Motor neuron (in vitro differentiated cells): ENCODE measurements at regions of chr6 and their contacts with region 1.

Region 1: DNA sequence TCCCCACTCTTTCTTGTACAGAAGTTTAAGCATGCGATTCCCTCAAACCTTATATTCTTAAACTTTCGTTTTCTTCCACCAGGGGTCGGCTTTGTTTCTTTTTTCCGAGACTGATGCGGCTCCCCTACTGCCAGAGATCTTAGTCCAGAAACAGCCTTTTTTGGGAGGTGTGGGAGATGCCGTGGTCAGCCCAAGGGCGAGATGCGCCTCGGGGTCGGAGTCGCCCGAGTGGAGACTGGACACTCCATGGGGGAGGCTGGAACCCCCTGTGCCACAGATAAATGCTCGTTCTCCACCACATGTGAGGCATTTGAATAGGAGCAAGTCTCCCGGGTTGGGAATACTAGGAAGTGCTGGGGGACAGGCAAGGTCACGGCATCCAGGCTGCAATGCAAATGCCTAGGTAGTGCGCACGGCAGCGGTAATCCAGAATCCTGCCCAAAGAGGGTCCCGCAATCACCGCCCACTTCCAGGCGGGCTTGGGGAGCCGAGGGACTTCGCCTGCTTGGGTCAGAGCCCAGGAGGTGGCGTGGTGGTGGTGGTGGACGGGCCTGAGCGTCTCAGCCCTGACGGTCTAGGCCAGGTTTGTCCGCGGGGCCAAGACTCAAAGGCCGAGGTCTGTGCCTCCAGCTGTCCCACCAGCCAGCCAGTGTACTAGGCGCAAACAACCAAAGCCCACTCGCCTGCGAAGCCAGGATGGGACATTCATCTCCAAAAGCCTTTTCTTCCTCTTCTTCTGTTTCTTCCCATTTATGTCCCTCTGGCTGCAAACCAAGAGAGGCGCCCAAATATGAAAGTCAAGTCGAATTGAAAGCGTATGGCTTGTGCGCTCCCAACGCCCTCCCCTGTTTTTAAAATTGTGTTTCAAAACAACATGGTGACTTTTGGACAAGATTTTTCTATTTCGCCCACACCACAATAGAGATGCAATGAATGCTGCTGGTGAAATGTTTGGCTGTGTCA is 39.3 kb upstream of the OSTM1 start:
- ATAC-seq: peak; percentile 35 to 69 (median 55)
- H3K4me3 ChIP-seq: no peak overlapping the region
- H3K27ac ChIP-seq: no peak overlapping the region
- H3K4me1 ChIP-seq: peaks cover 5 to 13% of the 10 kb centered on the region in 2 donors

Region 2: DNA sequence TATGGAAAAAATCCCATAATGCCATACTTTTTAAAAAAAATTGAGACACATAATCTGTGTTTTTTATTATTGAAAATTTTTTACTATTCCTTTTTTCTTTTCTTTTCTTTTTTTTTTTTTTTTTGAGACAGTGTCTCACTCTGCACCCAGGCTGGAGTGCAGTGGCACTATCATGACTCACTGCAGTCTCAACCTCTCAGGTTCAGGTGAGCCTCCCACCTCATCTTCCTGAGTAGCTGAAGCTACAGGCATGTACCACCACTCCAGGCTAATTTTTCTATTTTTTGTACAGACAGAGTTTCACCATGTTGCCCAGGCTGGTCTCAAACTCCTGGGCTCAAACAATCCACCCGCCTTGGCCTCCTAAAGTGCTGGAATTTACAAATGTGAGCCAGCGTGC is 281.5 kb after region 1 on chr6:
- in situ Hi-C with region 1: no loop called
- ATAC-seq: no peak
- H3K4me3 ChIP-seq: no peak overlapping the region
- H3K27ac ChIP-seq: no peak overlapping the region
- H3K4me1 ChIP-seq: no peaks in the 10 kb centered on the region

Region 3: GRCh38 chr6:108492131-108492766 is 378.4 kb after region 1 on chr6:
- in situ Hi-C with region 1: loop called in 2 of 9 experiments (anchors 25 kb)
- ATAC-seq: peak in 7 of 8 experiments; percentile 47 to 91 (median 67)
- H3K4me3 ChIP-seq: no peak overlapping the region
- H3K27ac ChIP-seq: no peak overlapping the region
- H3K4me1 ChIP-seq: no peaks in the 10 kb centered on the region

Region 4: DNA sequence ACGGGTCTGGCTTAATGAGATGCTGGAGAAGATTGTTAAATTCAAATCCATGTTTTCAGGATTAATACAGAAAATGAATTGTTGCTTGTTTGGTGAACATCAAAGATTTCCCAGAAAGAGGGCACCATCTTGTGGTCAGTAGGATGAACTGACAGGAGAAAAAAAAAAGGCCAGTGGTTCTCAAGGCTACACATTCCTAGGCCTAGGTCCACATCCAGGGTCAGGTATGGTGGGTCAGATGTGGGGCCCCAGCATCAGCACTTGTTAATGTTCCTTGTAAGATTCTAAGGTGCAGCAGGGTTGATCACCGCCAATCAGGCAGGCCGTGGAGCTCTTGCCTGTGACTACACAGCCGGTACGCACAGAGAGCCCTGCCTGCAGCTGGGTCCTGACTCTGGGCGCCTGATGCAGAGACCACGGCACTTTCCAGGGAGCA is 412.9 kb after region 1 on chr6:
- in situ Hi-C with region 1: loop called in 2 of 9 experiments (anchors 10 kb)
- ATAC-seq: peak in 7 of 8 experiments; percentile 38 to 53 (median 44)
- H3K4me3 ChIP-seq: no peak overlapping the region
- H3K27ac ChIP-seq: no peak overlapping the region
- H3K4me1 ChIP-seq: peaks cover 3 to 8% of the 10 kb centered on the region in 2 donors